Heart right ventricle (tissue), 16 donors: ENCODE measurements at regions of chr20 and their contacts with region 1.

Region 1: GRCh38 chr20:44210422-44211176 is at the start of gene OSER1:
- DNase-seq: peak; percentile 97
- ATAC-seq: peak; percentile 93 to 97 (median 96)
- H3K4me3 ChIP-seq: peak within 1 kb of the TSS; percentile 73 to 99 (median 93)
- H3K27ac ChIP-seq: peak within 1 kb of the TSS; percentile 87 to 99 (median 94)
- H3K4me1 ChIP-seq: peaks cover 0 to 66% (median 50%) of the 10 kb centered on the region in 9 donors
- H3K27me3 ChIP-seq: no peaks in the 10 kb centered on the region
- CTCF ChIP-seq: no peak
- total RNA-seq, gene OSER1: 22.6 to 37.3 (median 31.3) TPM

Region 2: GRCh38 chr20:43456809-43457639 is 753.6 kb before region 1 on chr20:
- intact Hi-C with region 1: loop called in 1 of 10 experiments (anchors 5 kb)
- DNase-seq: peak; percentile 79 to 93
- ATAC-seq: peak; percentile 83 to 95 (median 90)
- H3K4me3 ChIP-seq: peak overlapping the region; percentile 73 to 99 (median 92)
- H3K27ac ChIP-seq: peak overlapping the region; percentile 97 to 100 (median 100)
- H3K4me1 ChIP-seq: peaks cover 2 to 41% (median 28%) of the 10 kb centered on the region in 9 donors
- H3K27me3 ChIP-seq: peaks cover 0 to 5% (median 0%) of the 10 kb centered on the region in 7 donors
- CTCF ChIP-seq: no peak

Region 3: DNA sequence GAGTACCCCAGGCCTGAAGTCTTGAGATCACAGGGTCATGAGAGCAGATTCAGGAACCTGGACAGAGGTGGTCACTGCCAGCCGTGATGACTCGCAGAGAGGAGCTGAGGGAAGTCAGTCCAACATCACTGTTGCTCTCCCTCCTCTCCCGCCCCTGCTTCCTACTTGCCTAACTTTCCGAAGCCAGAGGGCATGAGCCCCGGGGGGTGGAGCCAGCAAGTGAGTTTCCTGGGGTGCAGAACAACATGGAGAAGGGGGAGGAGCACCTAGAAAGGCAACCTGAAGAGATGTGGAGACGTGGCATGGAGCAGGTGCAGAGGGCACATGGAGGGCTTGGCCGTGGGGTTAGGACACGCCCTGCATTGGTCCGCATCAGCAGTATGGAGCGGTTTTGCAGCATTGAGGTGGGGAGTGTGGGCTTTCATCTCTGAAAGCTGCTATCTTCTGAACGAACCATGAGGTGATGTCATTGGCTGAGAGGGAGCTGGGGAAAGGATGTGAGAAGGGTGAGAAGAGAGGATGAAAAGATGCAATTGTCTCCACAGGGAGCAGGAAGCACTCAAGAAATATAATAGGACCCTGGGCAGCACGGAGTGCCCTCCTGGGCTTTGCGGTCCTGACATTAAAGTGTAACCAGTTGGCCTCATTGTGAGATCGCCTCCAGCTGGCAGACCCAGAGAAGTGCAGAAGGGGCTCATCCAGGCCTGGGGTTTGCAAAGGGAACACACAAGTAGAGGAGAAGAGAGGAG is 61.5 kb after region 1 on chr20:
- intact Hi-C with region 1: no loop called
- DNase-seq: no peak
- ATAC-seq: no peak
- H3K4me3 ChIP-seq: no peak overlapping the region
- H3K27ac ChIP-seq: no peak overlapping the region
- H3K4me1 ChIP-seq: peaks cover 0 to 2% (median 0%) of the 10 kb centered on the region in 9 donors
- H3K27me3 ChIP-seq: no peaks in the 10 kb centered on the region
- CTCF ChIP-seq: peak in 1 of 9 donors; percentile 31

Region 4: GRCh38 chr20:44388466-44389023 is 177.9 kb after region 1 on chr20:
- intact Hi-C with region 1: loop called in 5 of 10 experiments (anchors 2 to 10 kb)
- DNase-seq: peak; percentile 33 to 68
- ATAC-seq: peak in 7 of 8 donors; percentile 50 to 80 (median 70)
- H3K4me3 ChIP-seq: no peak overlapping the region
- H3K27ac ChIP-seq: no peak overlapping the region
- H3K4me1 ChIP-seq: peaks cover 0 to 6% (median 0%) of the 10 kb centered on the region in 9 donors
- H3K27me3 ChIP-seq: peaks cover 0 to 27% (median 18%) of the 10 kb centered on the region in 7 donors
- CTCF ChIP-seq: peak; percentile 35 to 80 (median 64)

Region 5: GRCh38 chr20:44460795-44461141 is 250.2 kb after region 1 on chr20:
- intact Hi-C with region 1: loop called in 8 of 10 experiments (anchors 5 to 10 kb)
- DNase-seq: no peak
- ATAC-seq: peak in 1 of 8 donors; percentile 42
- H3K4me3 ChIP-seq: no peak overlapping the region
- H3K27ac ChIP-seq: no peak overlapping the region
- H3K4me1 ChIP-seq: no peaks in the 10 kb centered on the region
- H3K27me3 ChIP-seq: no peaks in the 10 kb centered on the region
- CTCF ChIP-seq: peak in 8 of 9 donors; percentile 7 to 60 (median 42)

Region 6: GRCh38 chr20:44475694-44476560 is 265.3 kb after region 1 on chr20 and contains the start of gene TTPAL:
- intact Hi-C with region 1: loop called in 2 of 10 experiments (anchors 5 to 10 kb)
- DNase-seq: peak; percentile 85 to 89
- ATAC-seq: peak; percentile 97 to 99 (median 98)
- H3K4me3 ChIP-seq: peak within 1 kb of the TSS; percentile 43 to 82 (median 70)
- H3K27ac ChIP-seq: peak within 1 kb of the TSS; percentile 75 to 97 (median 89)
- H3K4me1 ChIP-seq: peaks cover 3 to 21% (median 12%) of the 10 kb centered on the region in 9 donors
- H3K27me3 ChIP-seq: no peaks in the 10 kb centered on the region
- CTCF ChIP-seq: peak in 7 of 9 donors; percentile 28 to 68 (median 42)
- total RNA-seq, gene TTPAL: 2.6 to 7.3 (median 4.7) TPM

Region 7: GRCh38 chr20:44683263-44684046 is 472.9 kb after region 1 on chr20:
- intact Hi-C with region 1: loop called in 1 of 10 experiments (anchors 10 kb)
- DNase-seq: no peak
- ATAC-seq: peak in 7 of 8 donors; percentile 43 to 75 (median 54)
- H3K4me3 ChIP-seq: no peak overlapping the region
- H3K27ac ChIP-seq: no peak overlapping the region
- H3K4me1 ChIP-seq: peaks cover 0 to 14% (median 6%) of the 10 kb centered on the region in 9 donors
- H3K27me3 ChIP-seq: peaks cover 0 to 4% (median 0%) of the 10 kb centered on the region in 7 donors
- CTCF ChIP-seq: peak in 8 of 9 donors; percentile 46 to 75 (median 56)

Region 8: GRCh38 chr20:44738813-44739477 is 528.3 kb after region 1 on chr20:
- intact Hi-C with region 1: loop called in 3 of 10 experiments (anchors 5 to 10 kb)
- DNase-seq: peak in 1 of 2 donors; percentile 66
- ATAC-seq: peak; percentile 46 to 77 (median 62)
- H3K4me3 ChIP-seq: no peak overlapping the region
- H3K27ac ChIP-seq: peak overlapping the region in 1 of 10 donors; percentile 36
- H3K4me1 ChIP-seq: peaks cover 0 to 26% (median 6%) of the 10 kb centered on the region in 9 donors
- H3K27me3 ChIP-seq: no peaks in the 10 kb centered on the region
- CTCF ChIP-seq: no peak